GM12878 (cell line): ENCODE measurements at regions of chr15 and their contacts with region 1.

Region 1: DNA sequence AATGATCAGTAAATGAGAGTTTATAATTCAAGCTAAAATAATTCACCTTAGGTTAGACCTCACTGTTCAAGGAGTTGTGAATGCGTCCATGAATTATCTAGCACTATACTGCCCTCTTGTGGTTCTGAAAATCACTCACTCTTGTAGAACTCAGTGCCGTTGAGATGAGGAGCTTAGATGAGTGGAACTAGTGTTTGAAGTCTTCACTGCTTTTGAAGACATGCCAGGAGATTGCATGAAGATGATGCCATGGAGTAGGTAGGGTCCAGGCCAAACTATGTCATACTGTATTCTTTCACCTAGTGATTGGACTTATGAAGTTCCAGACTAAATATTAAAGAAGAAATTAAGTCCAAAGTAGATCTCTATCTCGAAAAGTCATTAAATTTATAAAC is 28.8 kb downstream of the LYSMD4 start:
- DNase-seq: peak; percentile 79
- ATAC-seq: peak; percentile 96
- H3K4me3 ChIP-seq: no peak overlapping the region
- H3K27ac ChIP-seq: no peak overlapping the region
- H3K4me1 ChIP-seq: peaks cover 27% of the 10 kb centered on the region
- H3K27me3 ChIP-seq: no peaks in the 10 kb centered on the region
- CTCF ChIP-seq: peak; percentile 65 to 84 (median 77)
- EP300 ChIP-seq: no peak
- POLR2A ChIP-seq: peak; percentile 36; the same call in 1 of the 2 replicates
- RAD21 ChIP-seq: peak; percentile 94

Region 2: DNA sequence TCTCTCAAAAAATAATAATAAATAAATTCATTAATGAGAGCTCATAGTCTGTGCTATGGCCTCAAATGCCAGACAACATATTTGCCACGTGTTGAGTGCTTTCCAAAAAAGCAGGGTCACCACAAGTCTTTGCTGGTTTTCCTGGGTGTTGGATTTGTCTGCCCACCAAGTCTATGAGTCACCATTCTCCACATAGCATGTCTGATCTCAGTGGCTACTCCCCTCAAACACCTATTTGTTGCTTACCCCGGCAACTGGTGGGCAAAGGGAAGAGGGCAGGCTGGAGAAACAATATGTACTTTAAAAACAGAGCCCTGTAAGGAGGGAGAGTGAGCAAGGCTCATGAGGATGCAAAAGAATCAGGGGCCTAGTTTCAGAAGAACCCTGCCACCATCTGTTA is 1863.9 kb before region 1 on chr15:
- CTCF ChIA-PET with region 1: no interaction called
- POLR2A ChIA-PET with region 1: no interaction called
- RAD21 ChIA-PET with region 1: no interaction called
- SMC1A ChIA-PET with region 1: no interaction called
- in situ Hi-C with region 1: no loop called
- intact Hi-C with region 1: no loop called
- DNase-seq: no peak
- ATAC-seq: no peak
- H3K4me3 ChIP-seq: no peak overlapping the region
- H3K27ac ChIP-seq: no peak overlapping the region
- H3K4me1 ChIP-seq: no peaks in the 10 kb centered on the region
- H3K27me3 ChIP-seq: no peaks in the 10 kb centered on the region
- CTCF ChIP-seq: no peak
- EP300 ChIP-seq: no peak
- POLR2A ChIP-seq: no peak
- RAD21 ChIP-seq: no peak

Region 3: GRCh38 chr15:99282121-99282520 is 422.3 kb before region 1 on chr15:
- CTCF ChIA-PET with region 1: interaction called, 184 read pairs
- POLR2A ChIA-PET with region 1: no interaction called
- RAD21 ChIA-PET with region 1: interaction called, 111 read pairs
- SMC1A ChIA-PET with region 1: interaction called, 163 read pairs
- in situ Hi-C with region 1: no loop called
- intact Hi-C with region 1: loop called (anchors 1 kb)
- DNase-seq: no peak
- ATAC-seq: no peak; the same call in 1 of the 3 replicates
- H3K4me3 ChIP-seq: no peak overlapping the region
- H3K27ac ChIP-seq: no peak overlapping the region
- H3K4me1 ChIP-seq: no peaks in the 10 kb centered on the region
- H3K27me3 ChIP-seq: no peaks in the 10 kb centered on the region
- CTCF ChIP-seq: no peak
- EP300 ChIP-seq: no peak
- POLR2A ChIP-seq: no peak
- RAD21 ChIP-seq: no peak

Region 4: GRCh38 chr15:99371180-99372103 is 333.0 kb before region 1 on chr15:
- CTCF ChIA-PET with region 1: interaction called, 28 read pairs
- POLR2A ChIA-PET with region 1: no interaction called
- RAD21 ChIA-PET with region 1: interaction called, 33 read pairs
- SMC1A ChIA-PET with region 1: interaction called, 29 read pairs
- in situ Hi-C with region 1: no loop called
- intact Hi-C with region 1: loop called (anchors 5 kb)
- DNase-seq: peak; percentile 63
- ATAC-seq: peak; percentile 92
- H3K4me3 ChIP-seq: no peak overlapping the region
- H3K27ac ChIP-seq: peak overlapping the region; percentile 71
- H3K4me1 ChIP-seq: peaks cover 14% of the 10 kb centered on the region
- H3K27me3 ChIP-seq: no peaks in the 10 kb centered on the region
- CTCF ChIP-seq: peak; percentile 12 to 52 (median 25); a peak in 3 of 6 replicates
- EP300 ChIP-seq: no peak
- POLR2A ChIP-seq: no peak
- RAD21 ChIP-seq: peak; percentile 77

Region 5: GRCh38 chr15:99565299-99566156 is 138.9 kb before region 1 on chr15 and contains the start of gene MEF2A:
- CTCF ChIA-PET with region 1: interaction called, 55 read pairs
- POLR2A ChIA-PET with region 1: interaction called, 3 read pairs
- RAD21 ChIA-PET with region 1: interaction called, 48 read pairs
- SMC1A ChIA-PET with region 1: interaction called, 43 read pairs
- in situ Hi-C with region 1: no loop called
- intact Hi-C with region 1: loop called (anchors 1 kb)
- DNase-seq: peak; percentile 69
- ATAC-seq: peak; percentile 71
- H3K4me3 ChIP-seq: peak within 1 kb of the TSS; percentile 99
- H3K27ac ChIP-seq: peak within 1 kb of the TSS; percentile 97
- H3K4me1 ChIP-seq: peaks cover 10% of the 10 kb centered on the region
- H3K27me3 ChIP-seq: no peaks in the 10 kb centered on the region
- CTCF ChIP-seq: no peak
- EP300 ChIP-seq: peak in 1 of 2 experiments; percentile 68; a peak in 1 of 4 replicates
- POLR2A ChIP-seq: peak; percentile 91
- RAD21 ChIP-seq: peak; percentile 9; the same call in 1 of the 2 replicates
- polyA plus RNA-seq, gene MEF2A: 7.2 to 7.9 TPM

Region 6: DNA sequence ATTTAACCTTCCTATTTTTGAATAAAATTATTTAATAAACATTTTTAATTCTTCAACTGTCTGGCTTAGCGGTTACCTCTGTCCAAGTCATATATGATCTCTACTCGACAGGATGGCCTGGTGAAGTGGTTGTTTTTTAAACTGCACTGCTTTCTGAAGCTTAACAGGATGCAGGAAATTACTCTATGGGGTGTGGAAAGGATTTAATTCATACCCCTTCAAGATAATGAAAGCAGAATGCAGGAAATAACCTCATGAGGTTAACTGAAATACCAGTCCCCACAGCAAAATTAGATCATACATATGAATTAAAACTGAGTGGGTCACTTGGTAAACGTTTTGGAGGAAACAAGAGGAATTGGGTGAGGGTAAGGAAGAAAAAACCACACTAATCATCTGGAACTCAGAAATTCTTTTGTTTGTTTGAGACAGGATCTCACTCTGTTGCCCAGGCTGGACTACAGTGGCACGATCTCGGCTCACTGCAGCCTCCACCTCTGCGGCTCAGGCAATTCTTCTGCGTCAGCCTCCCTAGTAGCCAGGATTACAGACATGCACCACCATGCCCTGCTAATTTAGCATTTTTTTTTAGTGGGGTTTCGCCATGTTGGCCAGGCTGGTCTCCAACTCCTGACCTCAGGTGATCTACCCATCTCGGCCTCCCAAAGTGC is 21.3 kb before region 1 on chr15:
- CTCF ChIA-PET with region 1: interaction called, 18 read pairs
- POLR2A ChIA-PET with region 1: no interaction called
- RAD21 ChIA-PET with region 1: interaction called, 5 read pairs
- SMC1A ChIA-PET with region 1: interaction called, 9 read pairs
- in situ Hi-C with region 1: no loop called
- intact Hi-C with region 1: no loop called
- DNase-seq: no peak
- ATAC-seq: peak; percentile 53
- H3K4me3 ChIP-seq: no peak overlapping the region
- H3K27ac ChIP-seq: no peak overlapping the region
- H3K4me1 ChIP-seq: no peaks in the 10 kb centered on the region
- H3K27me3 ChIP-seq: no peaks in the 10 kb centered on the region
- CTCF ChIP-seq: no peak
- EP300 ChIP-seq: no peak
- POLR2A ChIP-seq: no peak
- RAD21 ChIP-seq: no peak

Region 7: DNA sequence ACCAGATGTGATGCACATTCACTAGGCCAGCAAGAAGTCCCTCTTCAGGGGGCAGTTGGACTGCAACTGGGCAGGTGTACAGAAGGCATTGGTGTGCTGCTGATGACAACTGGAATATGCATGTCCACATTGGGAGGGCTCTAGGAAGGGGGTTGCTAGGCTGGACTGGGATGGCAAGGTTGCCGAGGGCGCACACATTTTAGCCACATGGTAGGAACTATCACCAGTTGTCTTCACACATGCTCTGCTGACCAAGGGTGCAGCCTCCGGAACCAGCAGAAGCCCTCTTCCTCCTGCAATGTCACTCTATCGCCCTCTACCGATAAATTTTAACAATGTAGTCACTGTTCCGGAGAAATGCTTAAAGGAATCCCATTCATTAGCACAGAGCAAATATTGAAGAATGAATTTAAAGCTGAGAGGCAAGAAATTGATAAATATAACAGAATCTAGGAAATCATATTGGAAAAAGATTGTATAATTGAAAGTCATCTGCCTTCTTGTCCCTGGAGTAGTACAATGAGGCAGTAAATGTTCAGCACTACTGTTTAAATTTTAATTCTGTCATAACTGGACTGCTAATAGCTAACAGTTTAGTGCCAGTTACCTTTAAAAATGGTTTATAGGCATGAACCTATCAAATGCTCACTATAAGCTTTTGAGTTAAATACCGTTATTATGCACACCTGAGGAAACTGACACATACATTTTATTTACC is 51.4 kb after region 1 on chr15:
- CTCF ChIA-PET with region 1: interaction called, 44 read pairs
- POLR2A ChIA-PET with region 1: no interaction called
- RAD21 ChIA-PET with region 1: interaction called, 20 read pairs
- SMC1A ChIA-PET with region 1: interaction called, 26 read pairs
- in situ Hi-C with region 1: no loop called
- intact Hi-C with region 1: loop called (anchors 5 kb)
- DNase-seq: peak; percentile 43
- ATAC-seq: peak; percentile 99
- H3K4me3 ChIP-seq: no peak overlapping the region
- H3K27ac ChIP-seq: no peak overlapping the region
- H3K4me1 ChIP-seq: peaks cover 5% of the 10 kb centered on the region
- H3K27me3 ChIP-seq: no peaks in the 10 kb centered on the region
- CTCF ChIP-seq: peak; percentile 80 to 91 (median 88)
- EP300 ChIP-seq: no peak
- POLR2A ChIP-seq: no peak
- RAD21 ChIP-seq: peak; percentile 96

Region 8: GRCh38 chr15:100020189-100020588 is 315.7 kb after region 1 on chr15:
- CTCF ChIA-PET with region 1: no interaction called
- POLR2A ChIA-PET with region 1: no interaction called
- RAD21 ChIA-PET with region 1: no interaction called
- SMC1A ChIA-PET with region 1: no interaction called
- in situ Hi-C with region 1: no loop called
- intact Hi-C with region 1: no loop called
- DNase-seq: no peak
- ATAC-seq: no peak
- H3K4me3 ChIP-seq: no peak overlapping the region
- H3K27ac ChIP-seq: no peak overlapping the region
- H3K4me1 ChIP-seq: no peaks in the 10 kb centered on the region; the same call in 1 of the 2 replicates
- H3K27me3 ChIP-seq: no peaks in the 10 kb centered on the region
- CTCF ChIP-seq: no peak
- EP300 ChIP-seq: no peak
- POLR2A ChIP-seq: no peak
- RAD21 ChIP-seq: no peak